Transverse colon (tissue), 4 donors: ENCODE measurements at regions of chr3 and their contacts with region 1.

Region 1: DNA sequence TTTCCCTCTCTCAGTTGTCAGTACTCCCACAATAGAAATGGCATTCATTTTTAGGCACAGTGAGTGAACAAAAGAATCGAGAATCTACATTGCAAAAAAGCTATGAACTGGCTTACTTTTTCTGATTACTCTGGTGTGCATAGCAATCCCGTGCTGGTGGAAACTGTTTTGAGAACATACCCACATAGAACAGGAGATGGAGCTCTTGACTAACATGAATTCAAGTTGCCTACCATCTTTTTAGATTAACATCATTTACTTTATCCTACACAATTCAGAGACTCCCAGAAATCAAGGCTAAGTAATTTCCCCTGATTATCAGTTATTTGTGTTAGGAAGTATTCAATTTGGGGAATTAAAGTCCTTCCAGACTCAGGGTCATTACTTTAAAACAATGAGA is 326.6 kb downstream of the ARPP21 start:
- DNase-seq: no peak
- H3K4me3 ChIP-seq: no peak overlapping the region
- H3K27ac ChIP-seq: no peak overlapping the region
- H3K4me1 ChIP-seq: no peaks in the 10 kb centered on the region
- H3K27me3 ChIP-seq: no peaks in the 10 kb centered on the region
- CTCF ChIP-seq: peak in 4 of 5 experiments; percentile 30 to 39 (median 32)
- EP300 ChIP-seq: no peak
- POLR2A ChIP-seq: no peak

Region 2: GRCh38 chr3:36677331-36678007 is 711.6 kb after region 1 on chr3:
- in situ Hi-C with region 1: loop called in 1 of 4 experiments (anchors 25 kb)
- intact Hi-C with region 1: no loop called
- DNase-seq: no peak
- H3K4me3 ChIP-seq: no peak overlapping the region
- H3K27ac ChIP-seq: no peak overlapping the region
- H3K4me1 ChIP-seq: no peaks in the 10 kb centered on the region
- H3K27me3 ChIP-seq: no peaks in the 10 kb centered on the region
- CTCF ChIP-seq: no peak
- EP300 ChIP-seq: no peak
- POLR2A ChIP-seq: no peak

Region 3: DNA sequence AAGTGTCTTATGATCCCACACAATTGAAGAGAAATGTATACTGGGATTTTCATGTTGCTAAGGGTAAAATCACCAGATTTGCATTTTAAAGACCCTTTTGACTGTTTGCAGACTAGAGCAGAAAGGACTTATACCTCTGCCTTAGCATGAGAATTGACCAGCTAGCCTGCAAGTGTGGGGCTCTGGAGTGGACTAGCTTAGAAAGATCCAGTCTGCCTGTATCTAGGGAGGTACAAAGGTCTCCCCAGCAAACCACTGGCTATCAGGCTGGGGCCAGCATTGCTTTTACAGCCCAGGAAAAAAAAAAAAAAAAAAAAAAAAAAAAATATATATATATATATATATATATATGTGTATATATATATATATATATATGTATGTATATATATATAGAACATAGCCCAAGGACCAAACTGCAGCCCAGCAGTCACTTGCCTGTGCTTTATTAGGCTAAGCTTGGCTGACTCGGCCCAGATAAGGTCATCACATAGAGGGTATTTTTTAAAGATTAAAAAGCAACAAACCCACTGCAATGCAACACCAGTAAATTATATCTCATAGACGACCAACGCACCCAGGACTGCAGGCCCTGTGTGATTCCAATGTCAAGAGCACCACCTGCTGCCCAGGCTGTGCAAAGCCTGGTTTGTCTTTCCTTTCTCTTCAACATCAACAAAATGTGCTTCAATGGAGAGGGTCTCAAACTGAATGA is 734.8 kb after region 1 on chr3:
- in situ Hi-C with region 1: loop called (anchors 25 kb)
- intact Hi-C with region 1: loop called (anchors 5 kb)
- DNase-seq: no peak
- H3K4me3 ChIP-seq: no peak overlapping the region
- H3K27ac ChIP-seq: no peak overlapping the region
- H3K4me1 ChIP-seq: no peaks in the 10 kb centered on the region
- H3K27me3 ChIP-seq: no peaks in the 10 kb centered on the region
- CTCF ChIP-seq: peak; percentile 45 to 58 (median 54)
- EP300 ChIP-seq: no peak
- POLR2A ChIP-seq: no peak